Heart left ventricle (tissue), 16 donors: ENCODE measurements at regions of chr6 and their contacts with region 1.

Region 1: DNA sequence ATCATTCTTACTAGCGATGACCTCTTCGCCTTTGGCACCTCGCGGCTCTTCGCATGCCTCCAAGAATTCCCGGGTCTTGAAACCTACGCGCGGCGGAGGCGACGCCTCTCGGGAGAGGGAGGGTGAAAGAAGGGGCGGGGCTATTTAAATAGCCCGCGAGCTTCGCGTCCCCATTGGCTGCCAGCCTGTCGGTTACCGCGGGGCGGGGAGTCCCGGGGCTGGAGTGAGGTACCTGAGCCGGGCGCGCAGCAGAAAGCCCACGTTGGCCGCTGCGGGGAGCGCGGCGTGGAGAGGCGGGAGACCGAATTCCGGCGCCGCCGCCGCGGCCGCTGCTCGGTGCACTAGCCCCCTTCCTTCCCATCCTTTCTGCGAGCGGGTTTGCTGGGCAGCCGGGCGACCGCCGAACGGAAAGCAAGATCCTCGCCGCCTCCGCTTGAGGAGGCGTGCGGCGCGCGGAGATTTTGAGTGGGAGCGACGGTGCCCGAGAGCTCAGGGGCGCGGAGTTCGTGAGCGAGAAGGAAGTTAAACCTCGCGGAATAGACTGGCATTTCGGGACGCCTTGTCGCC is at the start of gene BMP6:
- DNase-seq: peak; percentile 87 to 92 (median 90)
- ATAC-seq: peak; percentile 87 to 96 (median 94)
- H3K4me3 ChIP-seq: peak within 1 kb of the TSS; percentile 31 to 80 (median 66)
- H3K27ac ChIP-seq: peak within 1 kb of the TSS in 2 of 12 donors; percentile 14 to 27
- H3K4me1 ChIP-seq: peaks cover 0 to 44% (median 26%) of the 10 kb centered on the region in 12 donors
- H3K27me3 ChIP-seq: peaks cover 21 to 72% (median 33%) of the 10 kb centered on the region in 9 donors
- CTCF ChIP-seq: peak in 1 of 12 donors; percentile 7
- POLR2A ChIP-seq: peak in 1 of 2 donors; percentile 35
- total RNA-seq, gene BMP6: 1.4 to 5.1 (median 2.9) TPM

Region 2: DNA sequence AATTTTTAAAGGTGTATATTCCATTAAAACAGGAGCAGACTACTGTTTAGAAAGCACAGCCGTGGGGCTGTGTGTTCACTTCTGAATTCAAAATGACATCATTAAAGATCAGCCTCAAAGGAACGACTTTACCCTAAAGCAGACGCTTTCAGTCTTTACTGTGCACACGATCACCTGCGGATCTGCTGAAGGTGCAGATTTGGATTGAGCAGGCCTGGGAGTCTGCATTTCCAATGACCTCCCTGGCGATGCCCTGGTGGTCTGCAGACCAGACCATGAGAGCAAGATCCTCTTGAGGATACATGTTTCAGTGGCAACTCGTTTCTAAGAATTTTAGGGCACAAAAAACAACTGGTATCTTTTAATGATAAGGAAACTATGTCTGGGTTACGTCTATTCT is 157.4 kb after region 1 on chr6:
- intact Hi-C with region 1: no loop called
- DNase-seq: no peak
- ATAC-seq: no peak
- H3K4me3 ChIP-seq: no peak overlapping the region
- H3K27ac ChIP-seq: no peak overlapping the region
- H3K4me1 ChIP-seq: no peaks in the 10 kb centered on the region
- H3K27me3 ChIP-seq: no peaks in the 10 kb centered on the region
- CTCF ChIP-seq: no peak
- POLR2A ChIP-seq: no peak

Region 3: DNA sequence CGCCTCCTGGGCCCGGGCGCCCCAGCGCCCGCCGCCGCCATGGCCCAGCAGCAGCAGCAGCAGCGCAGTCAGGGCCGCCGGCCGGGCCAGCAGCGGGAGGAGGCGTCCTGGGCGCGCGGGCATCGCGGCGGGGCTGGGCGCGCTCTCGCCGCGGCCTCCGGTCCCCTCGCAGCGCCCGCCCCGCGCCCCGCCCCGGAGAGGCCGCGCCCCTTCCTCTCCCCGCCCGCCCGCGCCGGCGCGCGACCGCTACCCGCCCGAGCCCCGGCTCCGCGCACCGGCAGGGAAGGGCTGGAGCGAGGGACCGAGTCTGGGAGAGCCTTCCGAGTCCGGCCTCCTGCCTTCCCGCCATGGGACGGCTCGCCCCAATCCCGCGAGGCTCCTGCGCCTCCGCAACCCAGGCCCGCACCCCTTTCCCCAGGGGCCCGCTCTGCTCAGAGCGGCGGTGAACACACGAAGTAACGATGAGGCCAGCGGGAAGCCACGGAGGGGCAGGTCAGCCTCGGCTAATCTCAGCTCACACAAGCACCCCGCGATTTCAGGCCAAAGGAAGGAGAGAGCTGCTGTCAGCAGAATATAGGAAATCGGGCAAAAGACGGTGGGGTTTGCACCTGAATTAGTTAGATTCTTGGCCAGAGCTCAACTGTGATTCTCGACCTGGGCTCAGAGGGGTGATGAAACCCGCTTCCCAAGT is 184.9 kb after region 1 on chr6 and contains the start of gene TXNDC5:
- intact Hi-C with region 1: loop called in 5 of 10 experiments (anchors 5 to 10 kb)
- DNase-seq: peak; percentile 84 to 91 (median 87)
- ATAC-seq: peak; percentile 76 to 94 (median 90)
- H3K4me3 ChIP-seq: peak within 1 kb of the TSS; percentile 57 to 97 (median 74)
- H3K27ac ChIP-seq: peak within 1 kb of the TSS; percentile 14 to 88 (median 85)
- H3K4me1 ChIP-seq: peaks cover 0 to 38% (median 17%) of the 10 kb centered on the region in 12 donors
- H3K27me3 ChIP-seq: no peaks in the 10 kb centered on the region
- CTCF ChIP-seq: no peak
- POLR2A ChIP-seq: peak in 1 of 2 donors; percentile 43
- total RNA-seq, gene TXNDC5: 33.4 to 110 (median 43.6) TPM

Region 4: DNA sequence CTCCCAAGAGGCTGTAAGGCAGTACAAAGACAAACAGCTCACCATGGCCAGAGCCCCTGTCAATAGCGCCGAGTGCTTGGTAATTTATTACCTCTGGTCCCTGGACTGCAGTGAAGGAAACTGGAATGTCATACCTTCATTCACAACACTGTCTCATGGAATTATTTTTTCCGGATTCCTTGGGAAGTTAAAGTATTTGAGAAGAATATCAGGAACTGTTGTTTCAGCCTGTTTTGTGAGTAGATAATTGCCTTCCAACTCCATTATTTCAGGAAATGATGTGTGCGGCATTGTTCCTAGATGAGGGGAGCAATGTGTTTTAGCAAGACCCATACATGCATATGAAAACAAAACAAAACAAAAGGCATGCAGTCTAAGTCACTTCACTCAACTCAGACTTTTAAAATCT is 274.3 kb after region 1 on chr6:
- intact Hi-C with region 1: loop called in 7 of 10 experiments (anchors 5 kb)
- DNase-seq: no peak
- ATAC-seq: peak in 3 of 4 donors; percentile 54 to 69 (median 69)
- H3K4me3 ChIP-seq: no peak overlapping the region
- H3K27ac ChIP-seq: peak overlapping the region in 5 of 12 donors; percentile 2 to 24 (median 11)
- H3K4me1 ChIP-seq: peaks cover 0 to 20% (median 6%) of the 10 kb centered on the region in 12 donors
- H3K27me3 ChIP-seq: no peaks in the 10 kb centered on the region
- CTCF ChIP-seq: no peak
- POLR2A ChIP-seq: no peak

Region 5: DNA sequence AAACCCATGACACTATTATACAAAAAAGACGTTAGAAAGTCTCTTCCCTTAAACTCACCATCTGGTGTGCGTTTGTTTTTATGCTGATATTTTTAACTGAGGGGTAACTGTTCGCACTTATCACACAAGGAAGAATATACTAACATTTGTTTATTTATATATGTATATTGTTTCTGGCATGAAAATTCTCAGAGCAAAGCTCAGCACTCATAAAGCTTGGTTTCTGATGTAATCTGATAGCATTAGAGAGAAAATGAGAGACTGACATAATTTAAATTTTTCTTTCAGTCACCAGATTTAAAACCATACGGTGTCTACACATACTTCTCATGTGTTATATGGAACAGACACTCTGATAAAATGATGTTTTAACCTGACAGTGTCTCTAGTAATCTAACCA is 331.3 kb after region 1 on chr6:
- intact Hi-C with region 1: loop called (anchors 1 to 5 kb)
- DNase-seq: no peak
- ATAC-seq: no peak
- H3K4me3 ChIP-seq: no peak overlapping the region
- H3K27ac ChIP-seq: no peak overlapping the region
- H3K4me1 ChIP-seq: peaks cover 0 to 11% (median 3%) of the 10 kb centered on the region in 12 donors
- H3K27me3 ChIP-seq: no peaks in the 10 kb centered on the region
- CTCF ChIP-seq: no peak
- POLR2A ChIP-seq: no peak

Region 6: DNA sequence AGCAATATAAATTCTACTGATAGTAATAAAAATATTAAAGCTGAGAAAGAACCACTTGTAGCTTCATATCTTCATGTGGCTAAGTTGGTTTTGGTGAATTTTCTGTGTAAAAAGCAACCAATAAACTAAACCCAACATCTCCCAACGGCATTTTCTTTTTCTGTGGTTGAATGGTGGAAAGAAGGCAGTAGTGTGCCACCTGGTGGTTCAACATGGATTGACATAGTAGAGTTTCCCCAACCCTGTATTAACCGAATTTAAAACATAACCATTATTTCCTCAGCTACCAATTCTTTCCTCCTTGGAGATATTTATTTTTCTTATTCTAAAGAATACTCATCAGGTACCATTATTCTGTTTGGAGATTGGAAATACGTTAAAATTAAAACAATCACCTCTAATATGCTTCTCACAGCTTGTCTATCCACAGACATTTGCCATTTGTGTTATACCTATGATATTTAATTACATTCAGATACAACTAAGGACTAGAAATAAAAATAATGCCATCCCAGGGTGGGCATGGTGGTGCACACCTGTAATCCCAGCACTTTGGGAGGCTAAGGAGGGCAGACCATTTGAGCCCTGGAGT is 493.5 kb after region 1 on chr6:
- intact Hi-C with region 1: loop called in 4 of 10 experiments (anchors 5 to 10 kb)
- DNase-seq: peak in 1 of 5 donors; percentile 14
- ATAC-seq: no peak
- H3K4me3 ChIP-seq: no peak overlapping the region
- H3K27ac ChIP-seq: no peak overlapping the region
- H3K4me1 ChIP-seq: no peaks in the 10 kb centered on the region
- H3K27me3 ChIP-seq: peaks cover 0 to 4% (median 0%) of the 10 kb centered on the region in 9 donors
- CTCF ChIP-seq: peak; percentile 56 to 85 (median 74)
- POLR2A ChIP-seq: no peak